ENCODE measurements at regions of chr17 and their contacts with region 1.

Region 1: GRCh38 chr17:77974396-77974795 is 15.9 kb downstream of the TNRC6C start:
- DNase-seq: peak in 1 of 9 donors; percentile 28
- ATAC-seq: peak; percentile 31
- H3K4me3 ChIP-seq: no peak overlapping the region
- H3K4me3 Mint-ChIP-seq: peak overlapping the region in 7 of 10 donors; percentile 7 to 60 (median 49)
- H3K27ac ChIP-seq: no peak overlapping the region
- H3K27ac Mint-ChIP-seq: peak overlapping the region in 2 of 9 donors; percentile 32 to 35
- H3K4me1 ChIP-seq: peaks cover 14 to 21% of the 10 kb centered on the region in 2 donors
- H3K4me1 Mint-ChIP-seq: peaks cover 11 to 96% (median 92%) of the 10 kb centered on the region in 7 donors
- H3K27me3 ChIP-seq: no peaks in the 10 kb centered on the region
- H3K27me3 Mint-ChIP-seq: no peaks in the 10 kb centered on the region

Region 2: DNA sequence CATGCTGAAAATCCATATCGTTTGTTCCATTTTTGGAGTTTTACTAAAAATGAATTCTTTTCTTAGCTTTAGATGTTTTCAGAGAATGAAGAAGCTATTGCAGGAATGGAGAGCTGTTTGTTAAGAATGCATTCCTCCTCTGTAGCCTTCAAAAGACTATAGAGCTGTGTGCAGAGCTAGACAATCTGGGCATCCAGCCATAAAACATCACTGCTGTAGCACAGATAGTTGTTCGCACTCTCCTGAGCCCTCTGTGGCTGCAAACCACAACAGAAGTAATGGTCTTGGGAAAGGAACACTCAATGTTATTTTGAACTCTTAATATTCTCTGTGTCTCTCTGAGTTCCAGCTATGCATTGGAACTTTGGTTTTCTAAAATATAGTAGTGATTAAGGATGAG is 11.0 kb before region 1 on chr17:
- CTCF ChIA-PET with region 1: interaction called, 3 read pairs
- POLR2A ChIA-PET with region 1: interaction called, 55 read pairs
- intact Hi-C with region 1: loop called in 1 of 2 experiments (anchors 2 kb)
- DNase-seq: peak in 7 of 9 donors; percentile 71 to 85 (median 83)
- ATAC-seq: peak; percentile 70
- H3K4me3 ChIP-seq: peak overlapping the region; percentile 34
- H3K4me3 Mint-ChIP-seq: peak overlapping the region in 9 of 10 donors; percentile 71 to 98 (median 86)
- H3K27ac ChIP-seq: peak overlapping the region; percentile 10
- H3K27ac Mint-ChIP-seq: peak overlapping the region in 8 of 9 donors; percentile 27 to 93 (median 80)
- H3K4me1 ChIP-seq: peaks cover 63 to 67% of the 10 kb centered on the region in 2 donors
- H3K4me1 Mint-ChIP-seq: peaks cover 39 to 84% (median 75%) of the 10 kb centered on the region in 7 donors
- H3K27me3 ChIP-seq: no peaks in the 10 kb centered on the region
- H3K27me3 Mint-ChIP-seq: peaks cover 0 to 4% (median 0%) of the 10 kb centered on the region in 5 donors

Region 3: DNA sequence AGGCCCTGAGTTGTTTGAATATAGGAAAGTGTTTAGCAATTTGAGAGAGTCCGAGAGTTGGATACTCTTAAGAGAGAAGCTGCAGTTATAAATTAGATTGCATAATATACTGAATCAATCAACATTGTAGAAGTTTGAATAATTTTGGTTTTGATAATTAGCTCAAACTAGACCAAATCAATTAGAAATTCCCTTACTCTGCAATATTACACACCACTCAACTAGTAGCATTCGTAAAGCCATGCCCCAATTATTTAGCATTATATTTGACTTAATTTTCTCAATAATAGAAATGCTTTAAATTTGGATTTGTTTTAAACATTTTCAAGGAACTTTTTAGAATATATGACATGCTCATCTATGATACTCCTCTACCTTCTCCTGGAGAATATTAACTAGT is 33.3 kb after region 1 on chr17:
- CTCF ChIA-PET with region 1: no interaction called
- POLR2A ChIA-PET with region 1: no interaction called
- intact Hi-C with region 1: no loop called
- DNase-seq: no peak
- ATAC-seq: no peak
- H3K4me3 ChIP-seq: no peak overlapping the region
- H3K4me3 Mint-ChIP-seq: no peak overlapping the region
- H3K27ac ChIP-seq: no peak overlapping the region
- H3K27ac Mint-ChIP-seq: peak overlapping the region in 4 of 9 donors; percentile 13 to 78 (median 51)
- H3K4me1 ChIP-seq: peaks cover 0 to 3% of the 10 kb centered on the region in 2 donors
- H3K4me1 Mint-ChIP-seq: peaks cover 4 to 77% (median 49%) of the 10 kb centered on the region in 7 donors
- H3K27me3 ChIP-seq: no peaks in the 10 kb centered on the region
- H3K27me3 Mint-ChIP-seq: no peaks in the 10 kb centered on the region

Region 4: GRCh38 chr17:78133971-78134898 is 159.8 kb after region 1 on chr17:
- CTCF ChIA-PET with region 1: no interaction called
- POLR2A ChIA-PET with region 1: no interaction called
- intact Hi-C with region 1: no loop called
- DNase-seq: peak in 8 of 9 donors; percentile 72 to 89 (median 84)
- ATAC-seq: peak; percentile 58
- H3K4me3 ChIP-seq: peak overlapping the region; percentile 95
- H3K4me3 Mint-ChIP-seq: peak overlapping the region; percentile 81 to 99 (median 92)
- H3K27ac ChIP-seq: peak overlapping the region; percentile 77
- H3K27ac Mint-ChIP-seq: peak overlapping the region; percentile 68 to 95 (median 87)
- H3K4me1 ChIP-seq: peaks cover 56 to 66% of the 10 kb centered on the region in 2 donors
- H3K4me1 Mint-ChIP-seq: peaks cover 55 to 73% (median 66%) of the 10 kb centered on the region in 7 donors
- H3K27me3 ChIP-seq: no peaks in the 10 kb centered on the region
- H3K27me3 Mint-ChIP-seq: peaks cover 0 to 3% (median 0%) of the 10 kb centered on the region in 5 donors

Region 5: DNA sequence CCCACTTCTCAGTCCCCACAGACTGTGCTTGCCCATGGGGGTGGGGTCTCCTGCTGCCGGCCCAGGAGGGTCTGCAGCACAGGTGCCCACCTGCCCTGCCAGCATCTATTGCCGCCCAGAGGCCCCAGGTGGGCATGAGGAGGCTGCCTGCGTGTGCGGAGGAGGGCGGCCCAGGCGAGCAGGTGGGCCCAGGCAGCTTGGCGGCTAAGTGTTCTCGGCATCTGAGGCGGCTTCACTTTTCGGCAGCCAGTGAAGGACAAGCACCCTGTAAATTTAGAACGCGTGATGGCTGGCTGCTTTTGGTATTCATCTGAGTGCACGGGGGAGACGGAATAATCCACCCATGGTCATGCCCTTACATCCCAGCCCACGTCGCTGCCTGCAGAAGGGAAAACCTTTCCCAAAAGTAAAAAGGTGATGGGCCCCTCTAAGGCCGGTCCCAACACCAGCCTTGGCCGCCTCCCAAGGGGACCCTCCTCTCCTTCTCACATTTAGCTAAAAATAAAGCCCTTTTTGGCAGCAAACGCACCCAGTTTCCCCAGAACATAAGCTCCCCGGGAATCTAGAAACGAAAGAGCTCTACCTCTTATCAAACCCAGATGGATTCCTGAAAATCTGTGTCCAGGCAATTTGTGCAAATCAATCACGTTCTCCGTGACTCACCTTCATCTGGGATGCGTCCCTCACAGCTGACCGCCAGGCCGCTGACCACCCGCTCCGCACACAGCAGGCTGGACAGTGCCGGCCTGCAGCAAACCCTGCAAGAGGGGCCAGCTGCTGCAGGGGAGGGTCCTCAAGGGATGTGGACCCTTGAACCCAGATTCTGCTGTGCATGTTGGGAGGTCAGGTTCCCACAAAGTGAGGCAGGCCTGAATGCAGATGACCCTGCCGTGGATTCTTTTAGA is 1557.0 kb after region 1 on chr17:
- CTCF ChIA-PET with region 1: no interaction called
- POLR2A ChIA-PET with region 1: no interaction called
- intact Hi-C with region 1: no loop called
- DNase-seq: no peak
- ATAC-seq: no peak
- H3K4me3 ChIP-seq: no peak overlapping the region
- H3K4me3 Mint-ChIP-seq: no peak overlapping the region
- H3K27ac ChIP-seq: no peak overlapping the region
- H3K27ac Mint-ChIP-seq: no peak overlapping the region
- H3K4me1 ChIP-seq: no peaks in the 10 kb centered on the region
- H3K4me1 Mint-ChIP-seq: peaks cover 0 to 3% (median 0%) of the 10 kb centered on the region in 7 donors
- H3K27me3 ChIP-seq: peaks cover 0 to 3% of the 10 kb centered on the region in 2 donors
- H3K27me3 Mint-ChIP-seq: peaks cover 0 to 37% (median 13%) of the 10 kb centered on the region in 5 donors

Measured in naive thymus-derived CD4-positive, alpha-beta T cell (primary cell).